ENCODE measurements at regions of chr10 and their contacts with region 1.

Region 1: DNA sequence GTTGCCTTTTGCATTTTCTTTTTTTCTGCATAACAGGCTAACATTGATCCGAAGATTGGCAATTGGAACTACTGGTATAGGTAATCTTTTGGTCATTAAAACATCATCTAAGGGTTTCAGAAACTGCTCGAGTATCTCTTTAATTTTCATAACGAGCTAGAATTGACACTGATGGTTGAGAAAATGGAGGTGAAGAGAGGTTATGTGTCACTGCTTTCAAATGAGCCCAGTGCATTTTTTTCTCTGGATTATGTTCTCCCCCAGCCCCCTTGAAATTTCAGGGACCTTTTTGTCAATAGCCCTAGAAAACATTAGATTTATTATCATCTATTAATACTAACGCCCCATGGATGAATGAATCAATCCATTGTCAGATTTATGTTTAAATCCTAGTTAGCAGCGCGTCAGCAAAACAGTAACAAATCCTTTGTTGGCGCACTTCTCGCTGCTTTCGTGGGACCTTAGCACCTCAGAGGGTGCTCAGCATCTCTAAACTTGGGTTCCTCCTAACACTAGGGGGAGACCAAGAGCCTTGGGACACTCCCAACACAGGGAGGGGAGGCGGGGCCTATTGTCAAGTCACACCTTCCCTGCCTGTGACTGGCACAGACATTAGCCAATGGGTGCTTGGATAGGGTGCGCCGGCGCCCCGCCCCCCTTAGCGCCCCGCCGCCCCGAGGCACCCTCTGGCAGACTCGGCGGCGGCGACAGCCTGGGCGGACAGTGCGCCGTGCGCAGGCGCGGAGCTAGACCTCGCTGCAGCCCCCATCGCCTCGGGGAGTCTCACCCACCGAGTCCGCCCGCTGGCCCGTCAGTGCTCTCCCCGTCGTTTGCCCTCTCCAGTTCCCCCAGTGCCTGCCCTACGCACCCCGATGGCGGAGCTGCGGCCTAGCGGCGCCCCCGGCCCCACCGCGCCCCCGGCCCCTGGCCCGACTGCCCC is at the start of gene SUFU:
- DNase-seq: peak; percentile 99

Region 2: DNA sequence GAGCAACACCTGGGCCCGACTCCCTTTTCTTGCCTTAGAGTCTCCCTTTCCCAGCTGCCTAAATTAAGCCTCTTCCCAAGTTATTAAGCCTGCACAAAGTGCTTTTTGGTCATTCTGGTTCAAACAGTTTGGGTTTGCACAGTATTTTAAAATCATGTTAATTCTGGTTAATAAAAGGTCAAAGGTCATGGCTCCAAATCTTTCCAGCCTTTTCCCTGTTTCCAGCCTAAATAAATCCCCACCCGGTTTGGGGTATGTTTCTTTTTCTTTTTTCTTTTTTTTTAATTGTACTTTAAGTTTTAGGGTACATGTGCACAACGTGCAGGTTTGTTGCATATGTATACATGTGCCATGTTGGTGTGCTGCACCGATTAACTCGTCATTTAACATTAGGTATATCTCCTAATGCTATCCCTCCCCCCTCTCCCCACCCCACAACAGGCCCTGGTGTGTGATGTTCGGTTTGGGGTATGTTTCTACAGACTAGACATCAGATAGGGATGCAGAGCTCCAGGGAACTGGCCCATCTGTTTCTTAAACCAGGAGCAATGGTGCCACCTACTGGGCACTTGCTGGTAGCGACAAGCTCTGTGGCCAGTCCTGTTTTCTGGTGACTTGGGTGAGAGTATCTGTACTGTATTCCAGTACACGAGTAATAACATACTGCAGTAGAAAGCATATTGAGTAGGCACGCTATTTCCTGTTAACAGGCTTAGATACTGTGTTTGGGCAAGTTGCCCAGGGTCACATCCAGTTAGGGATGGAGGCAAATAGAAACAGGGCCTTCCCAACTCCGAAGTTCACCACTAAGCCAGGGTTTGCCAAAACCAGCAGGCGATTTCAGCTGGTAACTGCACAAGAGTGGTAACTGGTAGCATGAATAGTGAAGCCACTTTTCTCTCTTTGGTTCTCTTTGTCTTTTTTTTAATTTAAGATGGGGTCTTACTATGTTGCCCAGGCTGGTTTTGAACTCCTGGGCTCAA is 80.2 kb after region 1 on chr10:
- CTCF ChIA-PET with region 1: interaction called, 26 read pairs
- POLR2A ChIA-PET with region 1: interaction called, 17 read pairs
- DNase-seq: peak; percentile 91